CD8-positive, alpha-beta T cell (primary cell): ENCODE measurements at regions of chr1 and their contacts with region 1.

Region 1: DNA sequence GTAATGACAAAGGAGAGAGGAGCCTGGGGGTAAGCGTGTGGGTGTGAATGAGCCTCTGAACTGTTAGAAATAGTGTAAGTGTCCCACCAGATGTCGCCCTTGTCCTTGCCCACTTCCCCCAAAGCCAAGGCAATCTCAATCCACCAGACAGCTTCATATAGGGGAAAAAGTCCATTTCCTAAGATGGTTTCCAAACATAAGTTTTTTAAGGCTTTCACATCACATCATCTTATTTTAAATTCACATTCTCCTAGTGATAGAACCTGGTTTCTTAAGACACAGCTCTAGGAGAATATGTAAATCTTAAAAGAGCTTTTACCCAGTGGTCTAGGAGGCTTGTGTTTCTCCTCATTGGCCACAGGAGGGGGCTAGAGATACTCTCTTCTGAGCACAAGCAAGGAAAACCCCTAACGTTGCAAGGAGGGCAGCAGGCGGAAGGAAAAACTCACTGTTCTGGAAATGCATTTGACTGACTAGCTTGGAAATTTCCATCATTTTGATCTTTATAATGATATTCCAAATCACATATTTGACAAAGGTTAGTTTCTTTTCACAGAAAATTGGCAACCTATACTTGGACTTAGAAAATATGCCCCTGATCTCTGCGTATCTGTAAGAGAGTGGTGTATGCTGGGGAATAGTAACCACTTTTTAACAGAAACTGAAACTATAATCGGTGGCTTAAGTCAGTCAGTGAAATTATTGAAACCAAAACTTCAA is 51.9 kb upstream of the LPAR3 start:
- DNase-seq: peak; percentile 22 to 97 (median 73)
- ATAC-seq: peak; percentile 91
- H3K4me3 ChIP-seq: peak overlapping the region; percentile 54 to 75
- H3K4me3 Mint-ChIP-seq: peak overlapping the region; percentile 89
- H3K27ac ChIP-seq: peak overlapping the region; percentile 82 to 85
- H3K27ac Mint-ChIP-seq: peak overlapping the region; percentile 98
- H3K4me1 ChIP-seq: peaks cover 4% of the 10 kb centered on the region
- H3K4me1 Mint-ChIP-seq: peaks cover 16% of the 10 kb centered on the region
- H3K27me3 ChIP-seq: no peaks in the 10 kb centered on the region
- H3K27me3 Mint-ChIP-seq: no peaks in the 10 kb centered on the region
- CTCF ChIP-seq: peak; percentile 98

Region 2: GRCh38 chr1:84506002-84506728 is 438.8 kb before region 1 on chr1 and contains the starts of genes GNG5 and SPATA1:
- CTCF ChIA-PET with region 1: no interaction called
- POLR2A ChIA-PET with region 1: no interaction called
- intact Hi-C with region 1: loop called in 1 of 2 experiments (anchors 10 kb)
- DNase-seq: peak; percentile 91 to 98 (median 98)
- ATAC-seq: peak; percentile 89
- H3K4me3 ChIP-seq: peak within 1 kb of the TSS; percentile 87 to 95
- H3K4me3 Mint-ChIP-seq: peak within 1 kb of the TSS; percentile 94
- H3K27ac ChIP-seq: peak within 1 kb of the TSS; percentile 75 to 88
- H3K27ac Mint-ChIP-seq: peak within 1 kb of the TSS; percentile 96
- H3K4me1 ChIP-seq: peaks cover 40% of the 10 kb centered on the region
- H3K4me1 Mint-ChIP-seq: peaks cover 45% of the 10 kb centered on the region
- H3K27me3 ChIP-seq: no peaks in the 10 kb centered on the region
- H3K27me3 Mint-ChIP-seq: no peaks in the 10 kb centered on the region
- CTCF ChIP-seq: no peak
- total RNA-seq, gene GNG5: 19.5 TPM
- total RNA-seq, gene SPATA1: 0.52 to 0.94 TPM

Region 3: DNA sequence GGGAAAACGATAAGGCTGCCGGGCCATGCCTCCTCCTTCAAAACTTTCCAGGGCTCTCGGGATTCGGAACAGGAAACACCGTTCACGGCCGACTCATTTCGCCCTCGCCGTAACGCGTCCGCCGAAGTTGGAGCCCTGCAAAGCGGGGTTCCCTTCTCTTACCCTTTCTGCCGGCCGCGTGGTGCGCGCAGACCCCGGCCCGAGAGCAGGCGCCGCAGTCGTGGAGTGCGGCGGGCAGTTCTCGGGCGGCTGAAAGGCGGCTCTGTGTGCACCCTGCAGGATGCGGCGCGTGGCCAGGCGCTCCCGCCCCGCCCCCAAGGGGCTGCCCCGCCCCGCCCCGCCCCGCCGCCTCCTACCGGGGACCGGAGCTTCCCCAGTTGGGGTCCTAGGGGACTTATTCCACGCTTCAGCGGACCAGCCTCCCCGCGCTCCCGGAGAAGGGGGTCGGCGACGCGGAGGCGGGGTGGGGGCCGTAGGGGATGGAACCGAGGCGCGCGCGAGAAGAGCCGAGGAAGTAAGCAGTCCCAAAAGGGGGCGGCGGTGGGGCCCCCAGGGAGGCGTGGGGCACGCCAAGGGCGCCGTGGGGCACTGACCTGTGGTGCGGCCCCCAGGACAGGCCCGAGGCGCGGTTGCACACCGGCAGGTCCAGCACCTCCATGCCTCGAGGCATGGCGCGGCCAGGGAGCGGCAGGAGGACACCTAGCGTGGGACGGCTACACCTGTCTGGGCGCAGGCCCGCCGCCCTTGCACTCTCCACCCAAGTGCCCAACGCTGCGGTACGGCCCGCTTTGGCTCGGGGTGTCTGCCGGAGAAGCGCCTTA is 52.1 kb after region 1 on chr1 and contains the start of gene MCOLN2:
- CTCF ChIA-PET with region 1: interaction called, 9 read pairs
- POLR2A ChIA-PET with region 1: interaction called, 3 read pairs
- intact Hi-C with region 1: loop called (anchors 1 to 5 kb)
- DNase-seq: peak; percentile 16 to 77 (median 51)
- ATAC-seq: peak; percentile 69
- H3K4me3 ChIP-seq: peak within 1 kb of the TSS; percentile 66 to 84
- H3K4me3 Mint-ChIP-seq: peak within 1 kb of the TSS; percentile 84
- H3K27ac ChIP-seq: peak within 1 kb of the TSS; percentile 28 to 81
- H3K27ac Mint-ChIP-seq: peak within 1 kb of the TSS; percentile 57
- H3K4me1 ChIP-seq: peaks cover 20% of the 10 kb centered on the region
- H3K4me1 Mint-ChIP-seq: peaks cover 34% of the 10 kb centered on the region
- H3K27me3 ChIP-seq: no peaks in the 10 kb centered on the region
- H3K27me3 Mint-ChIP-seq: peaks cover 23% of the 10 kb centered on the region
- CTCF ChIP-seq: no peak
- total RNA-seq, gene MCOLN2: 12.7 to 23.1 TPM

Region 4: GRCh38 chr1:85042413-85042812 is 97.5 kb after region 1 on chr1:
- CTCF ChIA-PET with region 1: interaction called, 14 read pairs
- POLR2A ChIA-PET with region 1: no interaction called
- intact Hi-C with region 1: no loop called
- DNase-seq: no peak
- ATAC-seq: no peak
- H3K4me3 ChIP-seq: no peak overlapping the region
- H3K4me3 Mint-ChIP-seq: no peak overlapping the region
- H3K27ac ChIP-seq: no peak overlapping the region
- H3K27ac Mint-ChIP-seq: no peak overlapping the region
- H3K4me1 ChIP-seq: peaks cover 5% of the 10 kb centered on the region
- H3K4me1 Mint-ChIP-seq: peaks cover 6% of the 10 kb centered on the region
- H3K27me3 ChIP-seq: peaks cover 0 to 10% of the 10 kb centered on the region in 2 experiments
- H3K27me3 Mint-ChIP-seq: peaks cover 34% of the 10 kb centered on the region
- CTCF ChIP-seq: no peak

Region 5: DNA sequence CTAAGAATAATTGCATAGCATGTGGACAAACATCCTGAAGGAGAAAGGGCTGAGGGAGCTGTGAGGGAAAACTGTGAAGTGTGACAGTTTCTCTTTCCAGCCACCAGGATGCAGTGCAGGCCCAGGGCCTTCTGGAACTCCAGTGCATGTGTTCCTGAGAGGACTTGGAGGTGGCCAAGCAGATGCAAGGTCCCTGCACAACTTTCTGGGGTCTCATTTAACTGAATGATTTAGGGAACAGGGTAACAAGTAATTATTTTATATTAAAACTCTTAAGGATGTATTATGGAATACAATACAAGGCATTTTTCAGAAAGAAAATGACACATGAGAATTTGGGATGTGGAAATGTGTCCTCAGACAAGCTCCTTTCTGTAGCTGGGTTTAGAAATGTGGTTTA is 164.5 kb after region 1 on chr1:
- CTCF ChIA-PET with region 1: interaction called, 9 read pairs
- POLR2A ChIA-PET with region 1: no interaction called
- intact Hi-C with region 1: loop called (anchors 1 to 5 kb)
- DNase-seq: peak in 7 of 9 experiments; percentile 6 to 70 (median 50)
- ATAC-seq: peak; percentile 81
- H3K4me3 ChIP-seq: no peak overlapping the region
- H3K4me3 Mint-ChIP-seq: no peak overlapping the region
- H3K27ac ChIP-seq: no peak overlapping the region
- H3K27ac Mint-ChIP-seq: no peak overlapping the region
- H3K4me1 ChIP-seq: no peaks in the 10 kb centered on the region
- H3K4me1 Mint-ChIP-seq: no peaks in the 10 kb centered on the region
- H3K27me3 ChIP-seq: no peaks in the 10 kb centered on the region
- H3K27me3 Mint-ChIP-seq: peaks cover 3% of the 10 kb centered on the region
- CTCF ChIP-seq: peak; percentile 68

Region 6: DNA sequence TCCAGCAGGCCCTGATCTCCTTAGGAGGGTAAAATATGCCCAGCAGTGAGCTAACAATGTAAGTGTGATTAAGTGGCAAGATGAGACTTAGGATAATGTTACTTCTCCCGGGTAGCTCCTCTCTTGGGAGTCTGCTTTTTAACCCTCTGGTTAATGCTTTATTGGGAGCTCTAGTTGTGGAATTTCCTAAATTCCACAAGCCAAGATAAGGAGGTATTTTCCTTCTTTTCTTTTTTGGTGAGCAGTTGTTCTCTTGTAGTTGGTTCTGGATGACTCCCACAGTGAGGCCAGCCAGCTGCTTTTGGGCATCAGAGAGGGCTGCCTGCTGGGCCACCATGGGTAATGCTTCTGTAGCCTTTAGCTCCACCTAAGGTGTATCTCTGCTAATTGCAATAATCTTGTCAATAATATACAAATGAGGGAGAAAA is 295.3 kb after region 1 on chr1:
- CTCF ChIA-PET with region 1: interaction called, 11 read pairs
- POLR2A ChIA-PET with region 1: no interaction called
- intact Hi-C with region 1: loop called in 1 of 2 experiments (anchors 1 kb)
- DNase-seq: peak in 2 of 9 experiments; percentile 35 to 47
- ATAC-seq: peak; percentile 61
- H3K4me3 ChIP-seq: no peak overlapping the region
- H3K4me3 Mint-ChIP-seq: no peak overlapping the region
- H3K27ac ChIP-seq: no peak overlapping the region
- H3K27ac Mint-ChIP-seq: no peak overlapping the region
- H3K4me1 ChIP-seq: no peaks in the 10 kb centered on the region
- H3K4me1 Mint-ChIP-seq: peaks cover 13% of the 10 kb centered on the region
- H3K27me3 ChIP-seq: peaks cover 0 to 3% of the 10 kb centered on the region in 2 experiments
- H3K27me3 Mint-ChIP-seq: peaks cover 14% of the 10 kb centered on the region
- CTCF ChIP-seq: no peak

Region 7: DNA sequence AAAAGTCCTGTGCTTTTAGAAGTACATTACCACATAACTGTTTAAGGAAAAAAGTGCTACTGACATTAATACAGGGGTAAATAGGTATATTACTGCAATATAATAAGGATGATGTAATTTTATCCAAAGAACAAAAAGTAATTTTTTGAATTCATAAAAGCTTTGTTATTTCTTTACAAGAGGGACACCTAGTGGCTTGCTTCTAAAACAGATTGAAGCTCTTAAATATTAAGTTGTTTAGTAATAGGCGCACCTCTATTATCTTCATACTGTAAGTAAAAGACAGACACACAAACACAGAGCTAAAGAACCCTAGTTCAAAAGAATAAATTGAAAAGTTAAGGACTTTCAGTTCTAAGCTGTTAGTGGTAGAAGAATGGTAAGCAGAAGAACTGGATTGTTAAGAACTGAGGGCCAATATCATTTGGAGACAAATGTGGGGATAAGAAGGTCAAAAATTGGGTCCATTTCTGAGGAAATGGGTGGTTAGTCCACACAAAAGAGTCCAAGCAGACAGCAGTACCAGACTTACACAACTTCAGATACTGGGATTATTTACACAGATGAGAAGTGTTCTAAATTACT is 747.9 kb after region 1 on chr1:
- CTCF ChIA-PET with region 1: no interaction called
- POLR2A ChIA-PET with region 1: no interaction called
- intact Hi-C with region 1: loop called in 1 of 2 experiments (anchors 5 kb)
- DNase-seq: no peak
- ATAC-seq: no peak
- H3K4me3 ChIP-seq: no peak overlapping the region
- H3K4me3 Mint-ChIP-seq: no peak overlapping the region
- H3K27ac ChIP-seq: no peak overlapping the region
- H3K27ac Mint-ChIP-seq: no peak overlapping the region
- H3K4me1 ChIP-seq: no peaks in the 10 kb centered on the region
- H3K4me1 Mint-ChIP-seq: peaks cover 38% of the 10 kb centered on the region
- H3K27me3 ChIP-seq: no peaks in the 10 kb centered on the region
- H3K27me3 Mint-ChIP-seq: no peaks in the 10 kb centered on the region
- CTCF ChIP-seq: no peak